Activated CD4-positive, alpha-beta T cell treated with anti-CD3 and anti-CD28 coated beads, Interleukin-2, amount 10 ng/mL, durations not matched to agents 24 days and 14 days (primary cell): ENCODE measurements at regions of chr9 and their contacts with region 1.

Region 1: GRCh38 chr9:73880101-73880500 is 617.0 kb upstream of the RORB start:
- DNase-seq: no peak
- H3K4me3 Mint-ChIP-seq: no peak overlapping the region
- H3K27ac Mint-ChIP-seq: no peak overlapping the region
- H3K4me1 Mint-ChIP-seq: no peaks in the 10 kb centered on the region
- H3K27me3 Mint-ChIP-seq: no peaks in the 10 kb centered on the region

Region 2: DNA sequence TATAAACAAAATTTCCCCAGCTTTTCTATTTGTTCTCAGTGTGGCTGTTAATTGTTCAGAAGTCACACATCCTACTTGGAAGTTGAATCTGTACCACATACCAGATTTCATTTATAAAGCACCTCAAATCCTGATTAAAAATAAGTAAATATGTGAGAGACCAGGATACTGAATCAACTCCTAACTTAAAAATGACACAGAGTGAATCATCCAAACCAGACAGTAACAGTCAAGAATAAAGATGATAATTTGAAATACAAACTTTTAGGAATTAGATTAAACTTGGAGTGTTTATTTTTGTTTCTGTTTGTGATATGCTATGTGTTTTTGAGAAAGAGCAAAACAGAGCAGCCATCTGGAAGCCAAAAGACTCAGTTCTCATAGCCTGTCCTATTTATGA is 16.2 kb before region 1 on chr9:
- intact Hi-C with region 1: no loop called
- DNase-seq: no peak
- H3K4me3 Mint-ChIP-seq: no peak overlapping the region
- H3K27ac Mint-ChIP-seq: no peak overlapping the region
- H3K4me1 Mint-ChIP-seq: no peaks in the 10 kb centered on the region
- H3K27me3 Mint-ChIP-seq: no peaks in the 10 kb centered on the region

Region 3: GRCh38 chr9:73969936-73970335 is 89.8 kb after region 1 on chr9:
- intact Hi-C with region 1: no loop called
- DNase-seq: no peak
- H3K4me3 Mint-ChIP-seq: no peak overlapping the region
- H3K27ac Mint-ChIP-seq: no peak overlapping the region
- H3K4me1 Mint-ChIP-seq: no peaks in the 10 kb centered on the region
- H3K27me3 Mint-ChIP-seq: no peaks in the 10 kb centered on the region

Region 4: GRCh38 chr9:74336161-74336560 is 456.1 kb after region 1 on chr9:
- intact Hi-C with region 1: no loop called
- DNase-seq: no peak
- H3K4me3 Mint-ChIP-seq: no peak overlapping the region
- H3K27ac Mint-ChIP-seq: no peak overlapping the region
- H3K4me1 Mint-ChIP-seq: peaks cover 18% of the 10 kb centered on the region
- H3K27me3 Mint-ChIP-seq: no peaks in the 10 kb centered on the region

Region 5: GRCh38 chr9:74463825-74464224 is 583.7 kb after region 1 on chr9:
- intact Hi-C with region 1: loop called (anchors 10 kb)
- DNase-seq: no peak
- H3K4me3 Mint-ChIP-seq: no peak overlapping the region
- H3K27ac Mint-ChIP-seq: no peak overlapping the region
- H3K4me1 Mint-ChIP-seq: no peaks in the 10 kb centered on the region
- H3K27me3 Mint-ChIP-seq: no peaks in the 10 kb centered on the region